ENCODE measurements at regions of chr19 and their contacts with region 1.

Region 1: DNA sequence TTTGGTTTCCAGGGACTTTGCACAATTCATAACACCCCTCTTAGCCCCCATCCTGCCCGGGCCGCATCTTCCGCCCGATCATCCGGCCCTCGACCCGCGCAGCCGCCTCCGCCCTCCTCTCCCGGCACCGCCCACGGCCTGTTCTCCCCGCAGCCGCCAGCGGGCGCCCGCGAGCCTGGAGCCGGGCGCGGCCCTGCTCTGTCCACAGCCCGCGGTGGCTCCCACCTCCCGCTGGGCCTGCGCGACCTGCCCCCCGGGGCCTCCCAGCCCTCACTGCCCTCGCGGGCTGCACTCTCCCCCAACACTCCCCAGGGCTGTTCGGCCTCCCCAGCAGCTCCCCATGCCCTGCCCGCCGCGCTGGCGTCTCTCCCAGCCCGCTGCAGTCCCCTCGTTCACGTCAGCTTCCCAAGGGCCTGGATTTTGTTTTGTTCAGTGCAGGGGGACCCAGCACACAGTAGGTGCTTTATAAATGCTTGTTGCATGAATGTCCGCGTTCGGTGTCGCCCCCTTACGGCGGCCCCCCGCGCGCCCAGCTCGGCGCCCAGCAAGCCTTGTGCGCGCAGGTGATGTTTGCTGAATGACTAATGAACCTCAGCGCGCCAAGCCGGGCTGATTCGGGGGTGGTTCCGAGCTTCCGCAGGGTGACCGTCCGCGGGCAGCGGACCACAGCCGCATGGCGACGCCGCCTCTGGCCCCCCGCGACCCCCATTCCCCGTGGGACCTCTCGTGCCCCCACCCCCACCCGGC is 4.6 kb upstream of the APC2 start:
- DNase-seq: peak in 1 of 2 experiments; percentile 95
- H3K4me3 ChIP-seq: peak overlapping the region; percentile 49 to 74 (median 66)
- H3K27ac ChIP-seq: no peak overlapping the region
- H3K4me1 ChIP-seq: peaks cover 0 to 18% (median 7%) of the 10 kb centered on the region in 4 experiments; a peak in 5 of 7 replicates
- H3K27me3 ChIP-seq: peaks cover 26 to 41% (median 38%) of the 10 kb centered on the region in 4 experiments
- CTCF ChIP-seq: peak; percentile 78 to 94 (median 87)
- EP300 ChIP-seq: no peak
- POLR2A ChIP-seq: no peak
- RAD21 ChIP-seq: peak; percentile 36 to 55; a peak in 3 of 4 replicates

Region 2: GRCh38 chr19:1455336-1456120 is 10.2 kb after region 1 on chr19:
- CTCF ChIA-PET with region 1: interaction called, 54 read pairs
- POLR2A ChIA-PET with region 1: interaction called, 109 read pairs
- DNase-seq: peak; percentile 90 to 97
- H3K4me3 ChIP-seq: peak overlapping the region in 2 of 4 experiments; percentile 1 to 54; a peak in 3 of 8 replicates
- H3K27ac ChIP-seq: no peak overlapping the region
- H3K4me1 ChIP-seq: peaks cover 0 to 32% (median 27%) of the 10 kb centered on the region in 4 experiments; a peak in 6 of 7 replicates
- H3K27me3 ChIP-seq: peaks cover 6 to 25% (median 20%) of the 10 kb centered on the region in 4 experiments
- CTCF ChIP-seq: no peak
- EP300 ChIP-seq: no peak
- POLR2A ChIP-seq: no peak
- RAD21 ChIP-seq: no peak

Region 3: GRCh38 chr19:1465191-1466016 is 20.0 kb after region 1 on chr19:
- CTCF ChIA-PET with region 1: interaction called, 26 read pairs
- POLR2A ChIA-PET with region 1: interaction called, 72 read pairs
- DNase-seq: peak in 1 of 2 experiments; percentile 85
- H3K4me3 ChIP-seq: peak overlapping the region in 1 of 4 experiments; percentile 51; a peak in 2 of 8 replicates
- H3K27ac ChIP-seq: no peak overlapping the region
- H3K4me1 ChIP-seq: peaks cover 0 to 40% (median 21%) of the 10 kb centered on the region in 4 experiments; a peak in 5 of 7 replicates
- H3K27me3 ChIP-seq: peaks cover 56 to 66% (median 64%) of the 10 kb centered on the region in 4 experiments
- CTCF ChIP-seq: peak; percentile 50 to 87 (median 73)
- EP300 ChIP-seq: no peak
- POLR2A ChIP-seq: no peak
- RAD21 ChIP-seq: peak; percentile 19 to 39; a peak in 3 of 4 replicates

Region 4: DNA sequence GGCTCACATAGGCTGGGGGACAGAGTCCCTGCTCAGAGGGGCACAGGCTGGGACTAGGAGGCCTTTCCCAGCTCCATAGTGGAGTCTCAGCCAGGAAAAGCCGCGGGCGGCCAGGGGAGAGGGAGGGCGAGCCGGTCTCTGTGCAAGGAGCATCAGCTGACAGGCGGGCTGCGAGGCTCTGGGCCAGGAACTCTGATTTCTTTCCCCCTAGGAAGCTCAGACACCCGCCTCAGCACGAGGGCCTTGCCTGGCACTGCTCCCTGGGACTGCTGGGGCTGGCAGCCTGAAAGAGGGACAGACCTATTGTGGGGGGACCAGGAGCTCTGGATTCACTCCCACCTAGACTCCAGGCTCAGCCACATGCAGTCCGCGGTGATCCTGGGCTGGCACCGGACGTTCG is 76.3 kb after region 1 on chr19:
- CTCF ChIA-PET with region 1: no interaction called
- POLR2A ChIA-PET with region 1: no interaction called
- DNase-seq: no peak
- H3K4me3 ChIP-seq: no peak overlapping the region
- H3K27ac ChIP-seq: no peak overlapping the region
- H3K4me1 ChIP-seq: peaks cover 0 to 3% (median 1%) of the 10 kb centered on the region in 4 experiments; a peak in 3 of 7 replicates
- H3K27me3 ChIP-seq: peaks cover 19 to 36% (median 31%) of the 10 kb centered on the region in 4 experiments
- CTCF ChIP-seq: no peak
- EP300 ChIP-seq: no peak
- POLR2A ChIP-seq: no peak
- RAD21 ChIP-seq: no peak

Measured in H1 (cell line).